ENCODE measurements at regions of chr9 and their contacts with region 1.

Region 1: GRCh38 chr9:13088720-13089427 is 190.6 kb downstream of the MPDZ start:
- DNase-seq: no peak
- ATAC-seq: peak; percentile 49

Region 2: DNA sequence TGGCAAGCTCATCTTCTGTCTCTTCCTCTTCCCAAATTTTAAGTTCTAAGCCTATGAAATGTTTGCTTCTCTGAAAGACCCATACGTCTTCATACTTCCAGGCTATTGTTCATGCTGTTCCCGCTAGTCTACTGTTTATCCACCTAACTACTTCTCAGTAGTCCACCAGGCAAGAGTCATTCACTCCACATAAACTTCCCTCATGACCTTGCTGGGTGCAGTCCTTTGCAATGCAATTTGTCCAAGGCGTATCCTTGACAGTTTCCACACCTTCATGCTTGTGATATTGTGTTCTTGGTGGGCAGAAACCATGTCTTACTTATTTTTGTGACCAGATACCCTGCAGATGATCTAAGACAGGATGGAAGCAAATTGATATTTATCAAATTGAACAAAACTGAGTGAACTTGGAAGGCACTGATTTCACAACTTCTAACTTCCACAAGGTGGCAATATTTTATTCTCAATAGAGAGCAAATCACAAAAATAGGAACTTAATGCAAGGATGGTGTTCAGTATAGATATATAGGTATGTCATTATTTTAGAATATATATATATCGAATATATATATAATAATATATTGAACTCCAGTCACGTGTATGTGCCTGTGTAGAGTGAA is 365.4 kb before region 1 on chr9:
- intact Hi-C with region 1: loop called in 1 of 2 experiments (anchors 5 kb)
- DNase-seq: no peak
- ATAC-seq: peak; percentile 70

Region 3: GRCh38 chr9:13165236-13165945 is 76.5 kb after region 1 on chr9:
- intact Hi-C with region 1: no loop called
- DNase-seq: no peak
- ATAC-seq: no peak